K562 (cell line): ENCODE measurements at regions of chr1 and their contacts with region 1.

Region 1: GRCh38 chr1:200971955-200972711 is 51.4 kb downstream of the KIF21B start:
- DNase-seq: peak; percentile 73 to 89 (median 88)
- ATAC-seq: peak; percentile 73
- H3K4me3 ChIP-seq: no peak overlapping the region
- H3K27ac ChIP-seq: no peak overlapping the region
- H3K4me1 ChIP-seq: peaks cover 0 to 23% of the 10 kb centered on the region in 2 experiments; a peak in 1 of 5 replicates
- H3K27me3 ChIP-seq: peaks cover 0 to 15% of the 10 kb centered on the region in 2 experiments; a peak in 2 of 5 replicates
- CTCF ChIP-seq: peak; percentile 71 to 88 (median 82)
- EP300 ChIP-seq: no peak
- POLR2A ChIP-seq: no peak
- RAD21 ChIP-seq: peak; percentile 80 to 85

Region 2: DNA sequence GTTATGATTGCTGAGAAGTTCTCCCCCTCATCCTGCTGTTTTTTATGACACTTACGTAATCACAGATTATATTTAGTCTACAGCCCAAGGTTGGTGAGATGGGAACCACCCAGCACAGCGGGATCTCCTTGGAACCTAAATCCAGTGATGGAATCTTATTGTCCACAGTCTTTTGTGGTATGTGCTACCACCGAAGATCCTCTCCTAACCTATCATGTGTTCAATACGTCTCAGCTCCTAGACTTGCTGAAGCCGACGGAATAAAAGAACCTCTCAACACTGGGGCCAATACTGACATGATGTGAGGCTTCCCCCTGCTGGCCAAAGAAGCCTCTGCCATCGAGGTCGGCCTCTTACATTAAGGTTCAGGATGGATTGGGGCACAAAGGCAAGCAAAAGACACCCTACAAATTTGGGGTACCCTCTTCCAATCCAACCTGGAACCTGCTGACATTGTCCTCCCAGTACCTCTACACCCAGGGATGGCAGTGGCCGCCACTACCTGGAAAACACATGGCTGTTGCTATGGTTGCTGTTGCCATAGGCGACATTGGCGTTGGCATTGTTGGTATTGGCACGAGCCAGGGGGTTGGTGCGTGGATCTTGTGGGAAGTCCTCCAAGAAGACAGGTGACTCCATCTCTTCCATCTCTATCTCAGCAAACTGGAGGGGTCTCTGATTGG is 70.8 kb after region 1 on chr1:
- CTCF ChIA-PET with region 1: interaction called, 76 read pairs
- POLR2A ChIA-PET with region 1: interaction called, 9 read pairs
- in situ Hi-C with region 1: loop called (anchors 5 kb)
- intact Hi-C with region 1: loop called (anchors 1 kb)
- DNase-seq: peak; percentile 73 to 78 (median 76)
- ATAC-seq: peak; percentile 92
- H3K4me3 ChIP-seq: no peak overlapping the region
- H3K27ac ChIP-seq: no peak overlapping the region
- H3K4me1 ChIP-seq: no peaks in the 10 kb centered on the region
- H3K27me3 ChIP-seq: peaks cover 0 to 15% of the 10 kb centered on the region in 2 experiments; a peak in 3 of 5 replicates
- CTCF ChIP-seq: peak; percentile 91 to 97 (median 95)
- EP300 ChIP-seq: no peak
- POLR2A ChIP-seq: no peak
- RAD21 ChIP-seq: peak; percentile 98 to 99

Region 3: DNA sequence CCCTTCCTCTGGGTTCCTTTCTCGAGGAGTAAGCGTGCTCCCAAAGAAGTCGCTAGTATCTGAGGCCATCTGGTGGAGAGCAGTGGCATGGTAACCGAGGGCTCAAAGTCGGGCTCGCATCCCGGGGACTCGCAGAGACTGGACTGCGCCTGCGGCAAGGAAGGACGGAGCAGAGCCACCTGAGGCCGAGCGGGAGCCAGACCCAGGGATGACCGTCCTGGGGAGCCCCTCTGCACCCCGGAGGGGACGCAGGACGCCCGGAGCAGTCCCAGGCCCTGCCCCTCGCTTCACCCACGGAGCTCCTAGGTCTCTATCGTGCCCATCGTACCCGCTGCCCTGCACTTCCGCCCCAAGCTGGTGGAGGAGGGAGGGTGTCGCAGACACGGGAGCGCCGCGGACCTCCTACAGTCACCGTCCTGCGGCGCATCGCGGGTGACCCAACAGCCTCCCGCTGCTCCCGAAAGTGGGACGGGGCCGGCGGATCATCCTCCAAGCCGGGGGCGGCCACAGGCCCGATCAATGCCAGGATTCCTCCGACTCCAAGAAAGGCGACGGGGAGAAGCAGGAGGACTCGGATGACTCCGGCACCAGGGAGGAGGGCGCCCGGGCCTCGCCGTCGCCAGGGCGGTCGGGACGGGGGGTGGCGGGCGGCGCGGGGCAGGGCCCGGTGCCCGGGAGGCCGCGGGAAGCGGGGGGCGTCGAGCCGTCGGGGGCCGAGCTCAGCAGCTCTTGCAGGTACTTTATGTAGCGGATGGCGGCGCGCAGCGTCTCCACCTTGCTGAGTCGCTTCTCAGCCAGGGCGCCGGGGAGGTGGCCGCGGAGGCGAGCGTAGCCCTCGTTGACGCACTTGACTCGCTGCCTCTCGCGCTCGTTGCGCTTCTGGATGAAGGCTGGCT is 142.4 kb after region 1 on chr1:
- CTCF ChIA-PET with region 1: interaction called, 5 read pairs
- POLR2A ChIA-PET with region 1: interaction called, 5 read pairs
- in situ Hi-C with region 1: no loop called
- intact Hi-C with region 1: loop called (anchors 2 kb)
- DNase-seq: peak; percentile 83 to 85 (median 84)
- ATAC-seq: peak; percentile 98
- H3K4me3 ChIP-seq: no peak overlapping the region
- H3K27ac ChIP-seq: no peak overlapping the region
- H3K4me1 ChIP-seq: peaks cover 0 to 7% of the 10 kb centered on the region in 2 experiments; a peak in 2 of 5 replicates
- H3K27me3 ChIP-seq: peaks cover 20 to 51% of the 10 kb centered on the region in 2 experiments; a peak in 4 of 5 replicates
- CTCF ChIP-seq: peak; percentile 85 to 91 (median 90)
- EP300 ChIP-seq: no peak
- POLR2A ChIP-seq: no peak
- RAD21 ChIP-seq: peak; percentile 82 to 93

Region 4: DNA sequence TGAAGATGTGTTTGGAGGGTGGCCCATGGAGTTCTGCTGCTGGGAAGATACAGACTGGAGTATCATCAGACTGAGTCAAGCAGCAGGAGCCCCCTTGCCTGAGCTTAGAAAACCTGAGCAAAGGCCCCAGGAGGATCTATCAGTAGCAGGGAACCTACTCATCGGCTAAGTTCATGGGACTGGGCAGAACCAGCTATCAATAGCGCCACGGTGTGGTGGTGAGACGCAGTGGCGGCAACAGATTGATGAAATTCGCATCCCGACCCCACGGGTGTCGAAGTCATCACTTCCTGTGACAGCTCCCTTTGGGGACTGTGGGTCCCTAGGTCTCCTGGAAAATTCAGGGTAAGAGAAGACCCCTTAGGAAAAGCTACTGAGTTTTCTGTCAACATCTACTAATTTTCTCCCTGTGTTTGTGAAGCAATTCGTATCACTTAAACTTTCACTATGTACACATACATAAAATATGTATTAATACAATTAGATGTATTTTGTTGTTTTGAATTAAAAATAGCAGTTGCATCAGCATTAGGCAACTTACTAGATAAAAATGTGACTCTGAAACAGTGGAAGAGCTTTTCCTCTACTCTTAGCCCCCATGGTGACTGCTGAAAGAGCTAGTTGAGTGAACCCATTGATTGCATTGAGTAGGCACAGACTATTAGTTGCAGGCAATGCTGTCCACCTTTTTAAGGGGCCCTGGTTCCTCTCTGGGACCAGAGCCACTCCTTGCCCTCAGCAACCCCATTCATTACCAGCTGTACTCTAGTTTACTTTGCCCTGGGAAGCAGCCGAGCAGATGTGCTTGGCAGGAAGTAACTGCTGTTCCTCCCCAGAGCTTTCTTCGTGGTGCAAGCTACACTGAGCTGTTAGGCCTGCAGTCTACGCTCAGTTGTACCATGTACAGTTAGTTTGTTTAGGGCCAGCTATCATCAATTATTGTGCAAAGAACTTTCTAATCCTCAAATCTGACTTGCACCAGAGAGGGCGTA is 147.4 kb after region 1 on chr1:
- CTCF ChIA-PET with region 1: interaction called, 3 read pairs
- POLR2A ChIA-PET with region 1: interaction called, 5 read pairs
- in situ Hi-C with region 1: no loop called
- intact Hi-C with region 1: loop called (anchors 2 kb)
- DNase-seq: peak; percentile 72 to 81 (median 80)
- ATAC-seq: peak; percentile 92
- H3K4me3 ChIP-seq: no peak overlapping the region
- H3K27ac ChIP-seq: no peak overlapping the region
- H3K4me1 ChIP-seq: peaks cover 0 to 1% of the 10 kb centered on the region in 2 experiments; a peak in 2 of 5 replicates
- H3K27me3 ChIP-seq: peaks cover 48 to 71% of the 10 kb centered on the region in 2 experiments
- CTCF ChIP-seq: peak; percentile 86 to 95 (median 88)
- EP300 ChIP-seq: no peak
- POLR2A ChIP-seq: no peak
- RAD21 ChIP-seq: peak; percentile 48 to 77

Region 5: DNA sequence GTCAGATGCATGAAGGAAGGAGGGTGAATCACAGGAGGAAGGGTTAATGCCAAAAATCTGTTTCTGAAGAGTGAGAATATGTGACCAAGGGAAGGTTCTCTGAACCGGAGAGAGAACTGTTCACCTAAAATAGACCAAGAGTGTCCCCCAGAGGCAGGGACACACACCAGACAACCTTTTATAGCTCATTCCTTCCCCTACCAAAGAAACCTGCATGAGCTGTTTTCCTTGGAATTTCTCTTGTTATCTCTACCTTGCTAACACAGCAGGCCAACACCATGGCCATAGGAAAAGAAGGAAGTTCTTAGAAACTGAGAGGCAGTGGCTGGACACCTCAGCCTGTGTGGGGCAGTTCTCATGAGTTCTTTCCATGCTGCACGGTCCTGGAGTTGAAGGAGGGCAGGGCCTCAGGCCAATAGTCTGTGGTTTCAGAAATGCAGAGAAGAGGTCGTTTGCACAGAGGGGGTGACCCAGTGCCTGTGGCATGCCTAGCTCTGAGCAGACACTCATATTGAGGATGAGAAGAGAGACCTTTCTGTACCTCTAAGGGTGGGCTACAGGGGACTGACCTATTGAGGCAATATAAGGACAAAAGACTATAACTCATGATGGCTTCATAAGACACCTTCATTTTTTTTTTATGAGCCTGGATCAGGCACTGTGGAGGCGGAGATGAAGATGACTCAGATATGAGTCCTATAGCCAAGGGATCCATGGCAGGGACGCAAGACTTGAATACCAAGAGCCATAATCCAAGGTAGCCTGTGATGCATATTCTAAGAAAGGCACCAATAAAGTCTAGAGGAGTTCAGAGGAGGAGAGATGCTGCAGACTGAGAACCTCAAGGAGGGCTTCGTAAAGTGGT is 257.9 kb after region 1 on chr1:
- CTCF ChIA-PET with region 1: no interaction called
- POLR2A ChIA-PET with region 1: no interaction called
- in situ Hi-C with region 1: no loop called
- intact Hi-C with region 1: loop called (anchors 10 kb)
- DNase-seq: no peak
- ATAC-seq: no peak; the same call in 2 of the 3 replicates
- H3K4me3 ChIP-seq: no peak overlapping the region
- H3K27ac ChIP-seq: no peak overlapping the region
- H3K4me1 ChIP-seq: peaks cover 0 to 7% of the 10 kb centered on the region in 2 experiments; a peak in 1 of 5 replicates
- H3K27me3 ChIP-seq: peaks cover 35 to 47% of the 10 kb centered on the region in 2 experiments
- CTCF ChIP-seq: peak in 2 of 3 experiments; percentile 18 to 38; a peak in 2 of 6 replicates
- EP300 ChIP-seq: no peak
- POLR2A ChIP-seq: no peak
- RAD21 ChIP-seq: peak in 1 of 2 experiments; percentile 33; a peak in 1 of 4 replicates

Region 6: DNA sequence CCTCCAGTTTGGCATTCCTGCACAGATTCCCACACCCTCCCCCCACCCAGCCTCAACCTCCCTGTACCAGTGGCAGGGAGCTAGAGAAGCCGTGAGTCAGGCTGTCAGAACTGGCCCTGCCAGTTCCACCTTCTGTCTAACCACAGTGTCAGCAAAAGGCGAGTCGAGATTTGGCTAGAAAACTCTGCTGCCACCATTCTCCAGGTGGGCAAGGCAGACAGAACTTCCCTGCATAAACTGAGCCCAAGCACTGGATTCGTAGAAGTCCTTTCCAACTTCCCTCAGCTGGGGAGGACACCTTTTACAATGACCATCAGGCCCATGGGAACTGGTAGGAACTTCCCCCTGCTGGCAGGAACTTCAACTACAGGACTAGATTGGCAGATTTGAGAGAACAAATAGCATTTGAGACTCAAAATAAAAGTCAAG is 374.3 kb after region 1 on chr1:
- CTCF ChIA-PET with region 1: no interaction called
- POLR2A ChIA-PET with region 1: no interaction called
- in situ Hi-C with region 1: no loop called
- intact Hi-C with region 1: no loop called
- DNase-seq: peak; percentile 57 to 60 (median 58)
- ATAC-seq: peak; percentile 73
- H3K4me3 ChIP-seq: no peak overlapping the region
- H3K27ac ChIP-seq: no peak overlapping the region
- H3K4me1 ChIP-seq: no peaks in the 10 kb centered on the region
- H3K27me3 ChIP-seq: peaks cover 0 to 44% of the 10 kb centered on the region in 2 experiments; a peak in 2 of 5 replicates
- CTCF ChIP-seq: peak; percentile 64 to 74 (median 73)
- EP300 ChIP-seq: no peak
- POLR2A ChIP-seq: no peak
- RAD21 ChIP-seq: peak; percentile 16 to 53; a peak in 2 of 4 replicates